ENCODE measurements at regions of chr12 and their contacts with region 1.

Region 1: GRCh38 chr12:14613718-14614117 is 46.0 kb upstream of the PLBD1 start:
- DNase-seq: no peak
- H3K4me3 ChIP-seq: no peak overlapping the region
- H3K27ac ChIP-seq: no peak overlapping the region
- H3K4me1 ChIP-seq: no peaks in the 10 kb centered on the region
- H3K27me3 ChIP-seq: no peaks in the 10 kb centered on the region
- CTCF ChIP-seq: no peak
- POLR2A ChIP-seq: no peak

Region 2: GRCh38 chr12:14664510-14664909 is 50.8 kb after region 1 on chr12:
- intact Hi-C with region 1: loop called (anchors 2 kb)
- DNase-seq: no peak
- H3K4me3 ChIP-seq: no peak overlapping the region
- H3K27ac ChIP-seq: no peak overlapping the region
- H3K4me1 ChIP-seq: no peaks in the 10 kb centered on the region
- H3K27me3 ChIP-seq: no peaks in the 10 kb centered on the region
- CTCF ChIP-seq: peak in 2 of 3 donors; percentile 54 to 58
- POLR2A ChIP-seq: no peak

Region 3: GRCh38 chr12:15868186-15868585 is 1254.5 kb after region 1 on chr12:
- intact Hi-C with region 1: no loop called
- DNase-seq: no peak
- H3K4me3 ChIP-seq: no peak overlapping the region
- H3K27ac ChIP-seq: no peak overlapping the region
- H3K4me1 ChIP-seq: no peaks in the 10 kb centered on the region
- H3K27me3 ChIP-seq: no peaks in the 10 kb centered on the region
- CTCF ChIP-seq: no peak
- POLR2A ChIP-seq: no peak